Spleen (tissue), 13 donors: ENCODE measurements at regions of chr3 and their contacts with region 1.

Region 1: GRCh38 chr3:125055913-125056745 is at the start of gene HEG1:
- DNase-seq: peak; percentile 96
- H3K4me3 ChIP-seq: peak within 1 kb of the TSS; percentile 71 to 90 (median 76)
- H3K27ac ChIP-seq: peak within 1 kb of the TSS; percentile 64 to 94 (median 90)
- H3K4me1 ChIP-seq: peaks cover 32 to 47% (median 44%) of the 10 kb centered on the region in 6 donors
- H3K27me3 ChIP-seq: peaks cover 0 to 4% (median 0%) of the 10 kb centered on the region in 7 donors
- CTCF ChIP-seq: no peak
- POLR2A ChIP-seq: peak in 2 of 3 donors; percentile 22 to 35
- total RNA-seq, gene HEG1: 52.1 to 87.9 (median 74.4) TPM

Region 2: GRCh38 chr3:125119752-125120378 is 63.7 kb after region 1 on chr3:
- intact Hi-C with region 1: loop called (anchors 10 kb)
- DNase-seq: peak; percentile 80
- H3K4me3 ChIP-seq: peak overlapping the region in 3 of 8 donors; percentile 6 to 49 (median 12)
- H3K27ac ChIP-seq: peak overlapping the region; percentile 16 to 79 (median 52)
- H3K4me1 ChIP-seq: peaks cover 40 to 82% (median 66%) of the 10 kb centered on the region in 6 donors
- H3K27me3 ChIP-seq: no peaks in the 10 kb centered on the region
- CTCF ChIP-seq: no peak
- POLR2A ChIP-seq: no peak

Region 3: GRCh38 chr3:125141596-125142419 is 85.7 kb after region 1 on chr3:
- intact Hi-C with region 1: loop called (anchors 10 kb)
- DNase-seq: peak; percentile 95
- H3K4me3 ChIP-seq: peak overlapping the region; percentile 8 to 66 (median 36)
- H3K27ac ChIP-seq: peak overlapping the region; percentile 48 to 86 (median 80)
- H3K4me1 ChIP-seq: peaks cover 38 to 77% (median 70%) of the 10 kb centered on the region in 6 donors
- H3K27me3 ChIP-seq: no peaks in the 10 kb centered on the region
- CTCF ChIP-seq: peak in 10 of 11 experiments; percentile 6 to 63 (median 35)
- POLR2A ChIP-seq: no peak